Left cardiac atrium (tissue), 4 donors: ENCODE measurements at regions of chr17 and their contacts with region 1.

Region 1: GRCh38 chr17:12983991-12984884 is 33.6 kb downstream of the ELAC2 start:
- DNase-seq: peak; percentile 80
- ATAC-seq: peak; percentile 51 to 90

Region 2: DNA sequence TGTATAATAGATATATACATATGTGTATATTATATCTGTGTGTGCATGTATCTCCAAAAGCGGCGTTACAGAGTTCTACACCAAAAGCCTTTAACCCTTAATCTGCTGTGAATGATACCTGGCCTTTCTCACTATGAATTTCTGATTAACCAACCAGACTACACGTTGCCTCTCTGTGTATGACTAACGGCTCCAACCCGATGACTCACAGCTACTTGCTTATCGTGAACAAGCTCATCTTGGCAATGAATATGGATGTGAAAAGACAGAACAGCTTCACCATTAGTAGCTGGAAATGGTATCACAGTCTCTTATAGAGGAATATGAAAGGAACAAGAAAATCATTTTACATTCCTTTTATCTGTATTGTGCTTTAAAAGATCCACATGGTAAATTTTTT is 218.7 kb before region 1 on chr17:
- intact Hi-C with region 1: loop called in 1 of 2 experiments (anchors 10 kb)
- DNase-seq: peak; percentile 67
- ATAC-seq: peak; percentile 89 to 96